Transverse colon (tissue), 4 donors: ENCODE measurements at regions of chr4 and their contacts with region 1.

Region 1: DNA sequence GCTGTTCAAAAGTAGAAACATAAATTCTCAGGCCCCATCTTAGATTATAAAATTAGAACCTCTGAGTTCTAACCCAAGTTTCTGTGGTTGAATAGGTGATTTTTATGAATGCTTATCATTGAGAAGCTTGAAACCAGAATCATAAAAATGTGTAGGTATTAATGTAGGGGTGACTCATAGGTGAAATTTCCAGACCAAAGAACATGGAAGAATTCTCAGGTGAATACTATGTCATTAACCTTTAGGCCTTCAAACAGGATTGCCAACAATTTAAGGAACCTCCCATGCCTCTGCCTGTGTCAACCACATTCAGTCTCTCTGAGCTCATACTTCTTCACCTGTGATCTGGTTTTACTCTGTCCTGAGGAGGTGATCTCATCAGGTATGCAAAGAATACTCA is 177.8 kb downstream of the NPFFR2 start:
- DNase-seq: no peak
- H3K4me3 ChIP-seq: no peak overlapping the region
- H3K27ac ChIP-seq: no peak overlapping the region
- H3K4me1 ChIP-seq: no peaks in the 10 kb centered on the region
- H3K27me3 ChIP-seq: no peaks in the 10 kb centered on the region
- CTCF ChIP-seq: no peak
- EP300 ChIP-seq: no peak
- POLR2A ChIP-seq: no peak

Region 2: GRCh38 chr4:72186714-72187113 is 22.9 kb before region 1 on chr4:
- in situ Hi-C with region 1: no loop called
- intact Hi-C with region 1: loop called (anchors 1 kb)
- DNase-seq: no peak
- H3K4me3 ChIP-seq: no peak overlapping the region
- H3K27ac ChIP-seq: no peak overlapping the region
- H3K4me1 ChIP-seq: no peaks in the 10 kb centered on the region
- H3K27me3 ChIP-seq: no peaks in the 10 kb centered on the region
- CTCF ChIP-seq: no peak
- EP300 ChIP-seq: no peak
- POLR2A ChIP-seq: no peak

Region 3: GRCh38 chr4:72786401-72786990 is 576.9 kb after region 1 on chr4:
- in situ Hi-C with region 1: no loop called
- intact Hi-C with region 1: no loop called
- DNase-seq: no peak
- H3K4me3 ChIP-seq: no peak overlapping the region
- H3K27ac ChIP-seq: no peak overlapping the region
- H3K4me1 ChIP-seq: no peaks in the 10 kb centered on the region
- H3K27me3 ChIP-seq: no peaks in the 10 kb centered on the region
- CTCF ChIP-seq: no peak
- EP300 ChIP-seq: no peak
- POLR2A ChIP-seq: no peak

Region 4: GRCh38 chr4:73662709-73663546 is 1453.3 kb after region 1 on chr4:
- in situ Hi-C with region 1: no loop called
- intact Hi-C with region 1: no loop called
- DNase-seq: no peak
- H3K4me3 ChIP-seq: no peak overlapping the region
- H3K27ac ChIP-seq: no peak overlapping the region
- H3K4me1 ChIP-seq: peaks cover 0 to 7% (median 0%) of the 10 kb centered on the region in 4 donors
- H3K27me3 ChIP-seq: no peaks in the 10 kb centered on the region
- CTCF ChIP-seq: peak; percentile 36 to 48 (median 47)
- EP300 ChIP-seq: no peak
- POLR2A ChIP-seq: no peak